ENCODE measurements at regions of chr6 and their contacts with region 1.

Region 1: GRCh38 chr6:149711711-149712110 is 6.2 kb downstream of the LATS1 start:
- DNase-seq: no peak
- H3K4me3 ChIP-seq: no peak overlapping the region
- H3K27ac ChIP-seq: no peak overlapping the region
- H3K4me1 ChIP-seq: peaks cover 0 to 3% of the 10 kb centered on the region in 2 donors
- H3K27me3 ChIP-seq: no peaks in the 10 kb centered on the region
- CTCF ChIP-seq: no peak
- POLR2A ChIP-seq: no peak

Region 2: GRCh38 chr6:148934539-148934938 is 777.2 kb before region 1 on chr6:
- intact Hi-C with region 1: no loop called
- DNase-seq: no peak
- H3K4me3 ChIP-seq: no peak overlapping the region
- H3K27ac ChIP-seq: peak overlapping the region in 1 of 2 donors; percentile 19
- H3K4me1 ChIP-seq: no peaks in the 10 kb centered on the region
- H3K27me3 ChIP-seq: no peaks in the 10 kb centered on the region
- CTCF ChIP-seq: no peak
- POLR2A ChIP-seq: no peak

Region 3: DNA sequence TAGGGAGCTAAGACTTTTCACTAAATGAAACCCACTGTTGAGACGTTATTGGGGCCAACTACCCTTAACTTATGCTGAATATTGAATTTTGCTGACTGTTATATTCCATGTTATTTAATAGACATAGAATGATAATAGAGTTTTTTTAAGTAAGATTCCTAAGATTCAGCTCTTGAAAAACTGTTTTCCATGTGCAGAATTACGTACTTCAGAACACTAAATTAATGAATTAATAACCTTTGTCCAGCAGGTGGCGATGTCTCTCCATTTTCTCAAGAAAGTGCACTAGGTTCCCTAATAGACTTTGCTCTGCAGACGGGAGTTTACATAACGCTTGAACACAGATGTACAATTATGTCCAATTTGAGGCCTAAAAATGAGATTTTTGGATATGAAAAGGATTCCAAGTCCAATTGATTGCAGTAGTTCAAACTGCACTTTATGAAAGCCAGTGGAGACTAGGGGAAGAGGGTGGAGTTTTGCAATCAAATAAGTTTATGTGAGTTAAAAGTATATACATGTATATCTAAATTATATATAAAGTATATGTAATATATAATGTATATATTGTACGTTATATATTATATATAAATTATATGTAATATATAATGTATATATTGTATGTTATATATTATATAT is 682.8 kb before region 1 on chr6:
- intact Hi-C with region 1: loop called (anchors 5 kb)
- DNase-seq: no peak
- H3K4me3 ChIP-seq: no peak overlapping the region
- H3K27ac ChIP-seq: no peak overlapping the region
- H3K4me1 ChIP-seq: peaks cover 0 to 4% of the 10 kb centered on the region in 2 donors
- H3K27me3 ChIP-seq: no peaks in the 10 kb centered on the region
- CTCF ChIP-seq: peak; percentile 74 to 88 (median 80)
- POLR2A ChIP-seq: no peak

Region 4: GRCh38 chr6:149746147-149746946 is 34.6 kb after region 1 on chr6 and contains the start of gene NUP43:
- intact Hi-C with region 1: loop called (anchors 2 kb)
- DNase-seq: peak; percentile 86 to 93
- H3K4me3 ChIP-seq: peak within 1 kb of the TSS; percentile 77 to 81 (median 78)
- H3K27ac ChIP-seq: peak within 1 kb of the TSS; percentile 74 to 84
- H3K4me1 ChIP-seq: peaks cover 0 to 3% of the 10 kb centered on the region in 2 donors
- H3K27me3 ChIP-seq: no peaks in the 10 kb centered on the region
- CTCF ChIP-seq: peak; percentile 76 to 81 (median 76)
- POLR2A ChIP-seq: no peak
- total RNA-seq, gene NUP43: 15.5 to 27.8 (median 22.6) TPM